Mammary epithelial cell (primary cell): ENCODE measurements at regions of chr13 and their contacts with region 1.

Region 1: GRCh38 chr13:31352467-31352866 is 152.7 kb downstream of the B3GLCT start:
- DNase-seq: no peak
- H3K4me3 ChIP-seq: no peak overlapping the region
- H3K27ac ChIP-seq: no peak overlapping the region
- H3K4me1 ChIP-seq: no peaks in the 10 kb centered on the region
- H3K27me3 ChIP-seq: no peaks in the 10 kb centered on the region
- CTCF ChIP-seq: no peak

Region 2: DNA sequence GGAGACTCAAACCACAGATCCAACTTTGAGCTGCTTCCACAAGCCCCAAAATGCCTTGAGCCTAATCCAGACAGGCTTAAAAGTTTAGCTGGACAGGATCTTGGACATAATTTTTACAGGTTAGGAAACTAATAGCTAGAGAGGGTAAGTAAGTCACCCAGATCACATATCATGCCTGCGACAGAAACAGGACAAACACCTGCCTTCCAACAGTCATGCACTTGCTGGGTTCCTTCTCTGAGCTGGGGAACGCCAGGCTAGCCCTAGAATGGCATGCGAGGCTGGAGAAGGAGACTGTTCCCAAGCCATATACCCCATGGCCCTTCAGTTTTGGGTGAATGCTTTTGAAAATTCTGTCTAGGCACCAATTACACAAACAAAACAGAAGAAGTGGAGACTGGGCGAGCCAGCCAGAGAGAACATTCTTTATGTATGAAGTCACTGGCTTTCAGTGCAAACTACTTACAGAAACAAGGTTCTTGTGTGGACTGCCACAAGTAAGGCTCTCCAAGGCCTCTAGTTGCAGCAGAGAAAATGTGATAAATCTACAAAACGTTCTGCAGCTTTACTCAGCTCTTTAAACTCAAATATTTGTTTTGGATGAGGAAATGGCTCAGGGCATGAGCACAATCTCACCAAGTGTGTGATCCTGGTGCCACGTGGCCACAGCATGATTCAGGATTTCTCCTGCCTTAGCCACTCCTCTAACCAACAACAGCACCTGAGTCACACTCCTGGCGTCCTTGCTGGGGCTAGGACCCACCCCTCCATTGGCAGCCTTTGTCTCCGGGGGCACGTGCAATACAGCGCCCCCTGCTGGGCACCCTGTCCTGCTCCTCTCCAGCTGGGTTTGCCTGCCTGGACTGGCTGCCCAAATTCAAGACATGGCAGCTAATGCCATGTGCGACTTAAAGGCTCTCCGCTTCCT is 1428.6 kb before region 1 on chr13:
- CTCF ChIA-PET with region 1: no interaction called
- dilution Hi-C with region 1: no loop called
- in situ Hi-C with region 1: no loop called
- intact Hi-C with region 1: no loop called
- DNase-seq: peak; percentile 97
- H3K4me3 ChIP-seq: no peak overlapping the region
- H3K27ac ChIP-seq: peak overlapping the region; percentile 95
- H3K4me1 ChIP-seq: peaks cover 50% of the 10 kb centered on the region
- H3K27me3 ChIP-seq: no peaks in the 10 kb centered on the region
- CTCF ChIP-seq: peak; percentile 89 to 97

Region 3: GRCh38 chr13:31248965-31249539 is 103.4 kb before region 1 on chr13:
- CTCF ChIA-PET with region 1: no interaction called
- dilution Hi-C with region 1: loop called (anchors 5 kb)
- in situ Hi-C with region 1: no loop called
- intact Hi-C with region 1: no loop called
- DNase-seq: no peak
- H3K4me3 ChIP-seq: no peak overlapping the region
- H3K27ac ChIP-seq: no peak overlapping the region
- H3K4me1 ChIP-seq: no peaks in the 10 kb centered on the region
- H3K27me3 ChIP-seq: no peaks in the 10 kb centered on the region
- CTCF ChIP-seq: no peak